Astrocyte of the cerebellum (primary cell): ENCODE measurements at regions of chr7 and their contacts with region 1.

Region 1: GRCh38 chr7:55514546-55515256 is 57.6 kb downstream of the VOPP1 start:
- DNase-seq: no peak
- H3K4me3 ChIP-seq: no peak overlapping the region
- CTCF ChIP-seq: no peak

Region 2: DNA sequence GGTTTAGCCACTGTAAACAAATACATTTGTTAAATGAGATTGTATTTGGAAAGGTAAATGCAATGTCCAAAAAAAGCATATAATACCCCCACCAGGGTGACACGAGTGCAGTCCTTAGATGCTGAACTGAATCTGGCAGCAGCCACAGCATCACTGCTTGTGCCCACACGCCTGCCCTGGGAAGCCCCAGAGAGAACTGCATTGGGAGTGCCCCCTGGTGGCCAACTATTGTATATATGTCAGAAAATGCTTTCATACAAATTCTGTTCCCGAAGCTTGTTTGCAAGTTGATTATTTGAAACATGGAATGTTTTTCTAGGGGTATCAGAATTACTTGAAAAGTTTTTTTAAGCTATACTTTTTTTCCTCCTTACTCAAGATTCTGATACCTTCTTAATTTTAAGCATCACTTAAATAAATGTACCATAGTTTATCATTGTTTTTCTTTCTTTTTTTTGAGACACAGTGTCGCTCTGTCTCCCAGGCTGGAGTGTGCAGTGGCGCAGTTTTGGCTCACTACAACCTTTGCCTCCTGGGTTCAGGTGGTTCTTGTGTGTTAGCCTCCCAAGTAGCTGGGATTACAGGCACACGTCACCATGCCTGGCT is 99.4 kb before region 1 on chr7:
- in situ Hi-C with region 1: no loop called
- DNase-seq: peak; percentile 55
- H3K4me3 ChIP-seq: no peak overlapping the region
- CTCF ChIP-seq: peak; percentile 72

Region 3: GRCh38 chr7:55557666-55558188 is 43.0 kb after region 1 on chr7:
- in situ Hi-C with region 1: loop called (anchors 5 kb)
- DNase-seq: no peak
- H3K4me3 ChIP-seq: no peak overlapping the region
- CTCF ChIP-seq: no peak